Activated T-helper 1 cell treated with anti-CD3 and anti-CD28 coated beads, Interleukin-12 subunit alpha, Interleukin-12 subunit beta, Interleukin-2, Interleukin-4 antibody, amounts not matched to agents 30 ng/mL and 10 ng/mL and 1 ng/mL, durations not matched to agents 14 hours and 24 hours and 36 hours (primary cell): ENCODE measurements at regions of chr3 and their contacts with region 1.

Region 1: DNA sequence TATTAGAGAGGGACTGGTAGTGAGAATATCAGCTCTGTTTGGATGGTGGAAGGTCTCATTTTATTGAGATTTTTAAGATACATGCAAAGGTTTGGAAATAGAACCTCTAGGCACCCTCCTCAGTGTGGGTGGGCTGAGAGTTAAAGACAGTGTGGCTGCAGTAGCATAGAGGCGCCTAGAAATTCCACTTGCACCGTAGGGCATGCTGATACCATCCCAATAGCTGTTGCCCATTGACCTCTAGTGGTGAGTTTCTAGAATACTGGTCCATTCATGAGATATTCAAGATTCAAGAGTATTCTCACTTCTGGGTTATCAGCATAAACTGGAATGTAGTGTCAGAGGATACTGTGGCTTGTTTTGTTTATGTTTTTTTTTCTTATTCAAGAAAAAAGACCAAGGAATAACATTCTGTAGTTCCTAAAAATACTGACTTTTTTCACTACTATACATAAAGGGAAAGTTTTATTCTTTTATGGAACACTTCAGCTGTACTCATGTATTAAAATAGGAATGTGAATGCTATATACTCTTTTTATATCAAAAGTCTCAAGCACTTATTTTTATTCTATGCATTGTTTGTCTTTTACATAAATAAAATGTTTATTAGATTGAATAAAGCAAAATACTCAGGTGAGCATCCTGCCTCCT is 87.2 kb downstream of the TGFBR2 start:
- DNase-seq: no peak
- H3K4me3 Mint-ChIP-seq: no peak overlapping the region
- H3K27ac Mint-ChIP-seq: peak overlapping the region; percentile 41
- H3K4me1 Mint-ChIP-seq: peaks cover 60% of the 10 kb centered on the region
- H3K27me3 Mint-ChIP-seq: no peaks in the 10 kb centered on the region

Region 2: GRCh38 chr3:30112902-30113484 is 580.6 kb before region 1 on chr3:
- intact Hi-C with region 1: loop called (anchors 1 kb)
- DNase-seq: no peak
- H3K4me3 Mint-ChIP-seq: no peak overlapping the region
- H3K27ac Mint-ChIP-seq: no peak overlapping the region
- H3K4me1 Mint-ChIP-seq: peaks cover 4% of the 10 kb centered on the region
- H3K27me3 Mint-ChIP-seq: peaks cover 12% of the 10 kb centered on the region

Region 3: GRCh38 chr3:30476373-30477082 is 217.1 kb before region 1 on chr3:
- intact Hi-C with region 1: loop called (anchors 10 kb)
- DNase-seq: no peak
- H3K4me3 Mint-ChIP-seq: no peak overlapping the region
- H3K27ac Mint-ChIP-seq: no peak overlapping the region
- H3K4me1 Mint-ChIP-seq: peaks cover 51% of the 10 kb centered on the region
- H3K27me3 Mint-ChIP-seq: no peaks in the 10 kb centered on the region

Region 4: DNA sequence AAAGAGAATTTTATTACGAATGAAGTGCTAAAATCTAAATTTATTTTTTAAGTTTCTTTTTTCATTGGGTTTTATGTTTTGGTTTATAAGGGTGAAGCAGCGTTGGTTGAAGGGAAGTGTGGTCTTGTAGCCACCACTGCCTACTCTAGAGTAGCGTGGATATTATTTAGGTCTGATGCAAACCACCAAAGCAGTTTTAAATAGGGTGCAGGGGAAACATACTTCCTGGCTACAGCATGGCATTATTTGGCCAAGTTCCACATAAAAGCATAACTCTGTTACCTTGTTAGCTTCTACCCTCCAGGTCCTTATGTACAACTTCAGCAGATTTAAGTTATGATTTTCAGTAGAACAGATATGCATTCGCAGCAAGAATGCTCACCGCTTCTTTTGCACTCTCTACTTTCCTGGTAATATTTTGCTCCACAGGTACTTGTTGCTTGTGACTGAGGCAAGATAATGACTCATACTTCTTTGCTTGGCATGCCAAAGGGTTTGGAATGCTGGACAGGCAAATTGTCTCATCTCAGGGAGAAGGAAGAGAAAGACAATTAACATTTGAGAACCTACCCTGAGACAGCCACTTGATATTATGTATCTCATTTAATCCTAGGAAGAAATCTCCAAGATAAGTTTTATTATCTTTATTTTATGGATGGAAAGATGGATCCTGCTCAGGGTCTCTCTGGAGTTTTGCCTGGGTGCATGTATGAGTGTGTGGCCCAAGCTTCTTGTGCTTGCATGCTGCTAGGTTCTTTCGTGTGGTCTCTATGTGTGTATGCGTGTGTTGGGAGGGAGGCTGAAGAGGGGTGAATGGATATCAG is 81.8 kb before region 1 on chr3:
- intact Hi-C with region 1: loop called (anchors 1 kb)
- DNase-seq: no peak
- H3K4me3 Mint-ChIP-seq: peak overlapping the region; percentile 97
- H3K27ac Mint-ChIP-seq: peak overlapping the region; percentile 93
- H3K4me1 Mint-ChIP-seq: peaks cover 84% of the 10 kb centered on the region
- H3K27me3 Mint-ChIP-seq: no peaks in the 10 kb centered on the region

Region 5: GRCh38 chr3:31132132-31132769 is 438.7 kb after region 1 on chr3:
- intact Hi-C with region 1: loop called (anchors 2 kb)
- DNase-seq: no peak
- H3K4me3 Mint-ChIP-seq: no peak overlapping the region
- H3K27ac Mint-ChIP-seq: no peak overlapping the region
- H3K4me1 Mint-ChIP-seq: peaks cover 17% of the 10 kb centered on the region
- H3K27me3 Mint-ChIP-seq: no peaks in the 10 kb centered on the region

Region 6: DNA sequence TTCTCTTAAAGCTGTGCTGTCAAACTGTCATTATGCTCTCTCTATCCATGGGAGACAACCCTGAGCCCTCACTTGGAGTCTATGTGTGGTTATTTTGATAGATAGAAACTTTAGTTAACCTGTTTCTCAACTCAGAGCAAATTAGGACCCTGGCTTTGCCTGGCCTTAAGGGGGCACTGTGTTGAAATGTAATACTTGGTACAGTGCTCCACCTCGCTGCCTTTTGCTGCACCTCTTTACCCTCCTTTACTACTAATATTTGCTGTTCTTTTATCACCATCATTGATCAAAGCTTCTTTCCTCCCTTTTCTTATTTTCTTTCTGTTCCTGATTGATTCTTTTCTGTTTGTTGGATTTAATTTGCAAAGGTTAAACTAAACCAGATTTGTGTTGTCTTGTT is 873.4 kb after region 1 on chr3:
- intact Hi-C with region 1: no loop called
- DNase-seq: no peak
- H3K4me3 Mint-ChIP-seq: no peak overlapping the region
- H3K27ac Mint-ChIP-seq: peak overlapping the region; percentile 64
- H3K4me1 Mint-ChIP-seq: peaks cover 73% of the 10 kb centered on the region
- H3K27me3 Mint-ChIP-seq: no peaks in the 10 kb centered on the region